PC-9 (cell line): ENCODE measurements at regions of chr12 and their contacts with region 1.

Region 1: GRCh38 chr12:19624491-19624890 is 185.2 kb downstream of the AEBP2 start:
- DNase-seq: no peak
- H3K4me3 ChIP-seq: no peak overlapping the region
- H3K27ac ChIP-seq: no peak overlapping the region
- H3K4me1 ChIP-seq: no peaks in the 10 kb centered on the region
- H3K27me3 ChIP-seq: no peaks in the 10 kb centered on the region
- CTCF ChIP-seq: no peak

Region 2: GRCh38 chr12:19390051-19390598 is 234.4 kb before region 1 on chr12:
- CTCF ChIA-PET with region 1: no interaction called
- POLR2A ChIA-PET with region 1: no interaction called
- intact Hi-C with region 1: loop called (anchors 10 kb)
- DNase-seq: peak in 1 of 2 experiments; percentile 76
- H3K4me3 ChIP-seq: no peak overlapping the region
- H3K27ac ChIP-seq: no peak overlapping the region
- H3K4me1 ChIP-seq: peaks cover 16% of the 10 kb centered on the region
- H3K27me3 ChIP-seq: no peaks in the 10 kb centered on the region
- CTCF ChIP-seq: no peak